ENCODE measurements at regions of chr10 and their contacts with region 1.

Region 1: DNA sequence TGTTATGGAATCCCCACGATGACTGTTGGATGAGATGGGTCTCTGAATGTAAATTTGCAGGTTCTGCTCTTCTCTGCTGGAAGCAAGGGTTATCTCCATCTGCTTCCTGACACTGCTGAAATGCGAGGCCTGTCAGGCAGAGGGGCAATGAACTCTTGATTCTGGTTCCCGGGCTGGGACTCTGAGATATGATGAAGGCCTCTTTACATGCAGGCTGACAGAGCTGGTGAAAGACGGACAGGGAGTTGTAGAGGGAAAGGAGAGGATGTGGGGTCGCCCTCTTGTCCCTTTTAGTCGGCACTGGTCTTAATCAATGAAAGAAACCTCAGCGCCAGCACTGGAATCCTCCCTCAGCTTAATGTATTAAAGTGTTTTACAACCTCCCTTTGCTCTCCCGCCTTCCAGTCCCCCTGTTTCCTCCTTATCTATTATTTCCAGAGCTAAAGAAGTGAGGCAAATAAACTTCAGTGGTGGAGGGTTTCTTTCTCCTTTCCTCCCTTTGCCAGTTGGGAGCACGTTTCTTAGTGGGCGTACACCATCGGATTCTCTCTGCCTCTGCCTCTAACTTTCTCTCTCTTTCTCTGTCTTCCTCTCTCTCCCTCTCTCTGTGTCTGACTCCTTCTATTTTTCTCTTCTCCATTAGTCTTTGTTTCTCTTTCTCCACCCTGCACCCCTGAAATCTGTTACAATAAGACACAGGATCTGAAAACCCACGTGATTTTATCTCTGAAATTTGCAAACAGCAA is 145.6 kb downstream of the BAMBI start:
- DNase-seq: no peak
- H3K4me3 ChIP-seq: no peak overlapping the region
- H3K4me3 Mint-ChIP-seq: no peak overlapping the region
- H3K27ac Mint-ChIP-seq: no peak overlapping the region
- H3K4me1 ChIP-seq: no peaks in the 10 kb centered on the region
- H3K4me1 Mint-ChIP-seq: no peaks in the 10 kb centered on the region
- H3K27me3 ChIP-seq: no peaks in the 10 kb centered on the region
- H3K27me3 Mint-ChIP-seq: no peaks in the 10 kb centered on the region
- CTCF ChIP-seq: no peak

Region 2: GRCh38 chr10:28722065-28722803 is 100.7 kb before region 1 on chr10:
- CTCF ChIA-PET with region 1: no interaction called
- POLR2A ChIA-PET with region 1: no interaction called
- intact Hi-C with region 1: no loop called
- DNase-seq: peak; percentile 66 to 72
- H3K4me3 ChIP-seq: peak overlapping the region; percentile 68
- H3K4me3 Mint-ChIP-seq: peak overlapping the region; percentile 91
- H3K27ac Mint-ChIP-seq: peak overlapping the region; percentile 75
- H3K4me1 ChIP-seq: peaks cover 23% of the 10 kb centered on the region
- H3K4me1 Mint-ChIP-seq: peaks cover 8% of the 10 kb centered on the region
- H3K27me3 ChIP-seq: no peaks in the 10 kb centered on the region
- H3K27me3 Mint-ChIP-seq: no peaks in the 10 kb centered on the region
- CTCF ChIP-seq: peak in 1 of 2 experiments; percentile 32

Region 3: GRCh38 chr10:28796606-28797512 is 26.0 kb before region 1 on chr10:
- CTCF ChIA-PET with region 1: no interaction called
- POLR2A ChIA-PET with region 1: no interaction called
- intact Hi-C with region 1: no loop called
- DNase-seq: no peak
- H3K4me3 ChIP-seq: no peak overlapping the region
- H3K4me3 Mint-ChIP-seq: no peak overlapping the region
- H3K27ac Mint-ChIP-seq: no peak overlapping the region
- H3K4me1 ChIP-seq: peaks cover 14% of the 10 kb centered on the region
- H3K4me1 Mint-ChIP-seq: peaks cover 7% of the 10 kb centered on the region
- H3K27me3 ChIP-seq: no peaks in the 10 kb centered on the region
- H3K27me3 Mint-ChIP-seq: no peaks in the 10 kb centered on the region
- CTCF ChIP-seq: no peak

Region 4: GRCh38 chr10:28839600-28840007 is 16.7 kb after region 1 on chr10:
- CTCF ChIA-PET with region 1: no interaction called
- POLR2A ChIA-PET with region 1: no interaction called
- intact Hi-C with region 1: loop called (anchors 2 kb)
- DNase-seq: peak in 1 of 2 experiments; percentile 48
- H3K4me3 ChIP-seq: no peak overlapping the region
- H3K4me3 Mint-ChIP-seq: no peak overlapping the region
- H3K27ac Mint-ChIP-seq: no peak overlapping the region
- H3K4me1 ChIP-seq: peaks cover 26% of the 10 kb centered on the region
- H3K4me1 Mint-ChIP-seq: peaks cover 24% of the 10 kb centered on the region
- H3K27me3 ChIP-seq: no peaks in the 10 kb centered on the region
- H3K27me3 Mint-ChIP-seq: no peaks in the 10 kb centered on the region
- CTCF ChIP-seq: no peak

Measured in Caco-2 (cell line).